Lower leg skin (tissue), 4 donors: ENCODE measurements at regions of chr2 and their contacts with region 1.

Region 1: DNA sequence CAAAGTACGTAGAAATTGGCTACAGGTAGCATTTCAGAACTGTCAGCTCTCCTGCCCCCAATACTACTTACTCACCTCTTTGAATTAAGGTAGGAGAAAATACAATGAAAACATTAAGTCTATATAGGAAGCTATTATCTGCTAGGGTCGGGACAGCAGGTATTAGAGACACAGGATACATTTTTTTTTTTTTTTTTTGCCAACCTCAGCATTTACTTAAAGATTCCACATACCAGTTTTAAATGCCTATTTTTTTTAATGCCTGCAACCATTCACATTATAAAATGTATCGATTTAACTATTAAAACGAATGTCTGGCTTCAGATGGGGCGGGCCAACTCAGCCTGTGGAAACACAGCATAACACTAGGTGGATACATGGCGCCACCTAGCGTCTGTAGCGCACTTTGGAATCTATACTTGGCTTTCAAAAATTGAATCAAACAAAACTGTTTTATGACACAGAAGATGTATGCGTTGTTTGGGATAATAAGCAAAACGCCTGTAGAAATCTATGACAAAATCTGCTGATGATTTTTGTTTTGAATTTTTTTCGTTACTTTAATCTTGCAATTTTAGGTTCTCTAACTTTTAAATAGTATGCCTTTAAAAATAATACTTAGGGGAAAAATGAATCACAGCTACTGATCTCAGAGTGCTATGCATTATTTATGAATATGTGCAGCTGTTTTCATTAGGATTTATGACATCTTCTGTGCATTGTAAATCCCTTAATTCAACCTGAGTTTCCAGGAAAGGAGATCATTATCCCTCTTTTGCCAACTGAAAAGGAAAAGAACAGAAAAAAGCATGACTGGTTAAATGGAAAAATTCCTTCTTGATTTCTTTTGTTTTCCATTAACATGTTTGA is 261.0 kb downstream of the NYAP2 start:
- DNase-seq: peak; percentile 56 to 93
- H3K4me3 ChIP-seq: no peak overlapping the region
- CTCF ChIP-seq: no peak
- POLR2A ChIP-seq: no peak

Region 2: GRCh38 chr2:225122583-225123486 is 537.7 kb before region 1 on chr2:
- intact Hi-C with region 1: loop called (anchors 5 kb)
- DNase-seq: no peak
- H3K4me3 ChIP-seq: no peak overlapping the region
- CTCF ChIP-seq: no peak
- POLR2A ChIP-seq: no peak

Region 3: GRCh38 chr2:225282858-225283710 is 377.4 kb before region 1 on chr2:
- intact Hi-C with region 1: loop called (anchors 5 kb)
- DNase-seq: no peak
- H3K4me3 ChIP-seq: no peak overlapping the region
- CTCF ChIP-seq: no peak
- POLR2A ChIP-seq: no peak

Region 4: DNA sequence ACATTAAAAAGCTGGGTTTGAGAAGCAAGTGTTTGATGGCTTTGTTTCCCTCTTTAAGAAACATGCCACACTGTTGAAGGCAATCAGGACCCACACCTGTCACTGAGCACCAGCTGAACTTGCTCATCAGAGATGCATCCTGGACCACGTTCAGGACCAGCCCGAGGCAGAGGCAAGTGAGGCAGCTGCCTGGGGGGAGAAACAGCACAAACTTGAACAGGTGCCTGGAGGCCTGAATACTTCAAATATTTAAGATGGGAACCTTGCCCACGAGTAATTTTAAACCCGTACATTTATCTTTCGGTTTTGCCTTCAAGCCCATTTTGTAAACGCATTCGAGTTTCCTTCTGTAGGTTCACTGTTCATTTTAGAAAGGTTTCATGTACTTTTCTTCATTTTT is 160.3 kb after region 1 on chr2:
- intact Hi-C with region 1: no loop called
- DNase-seq: no peak
- H3K4me3 ChIP-seq: no peak overlapping the region
- CTCF ChIP-seq: no peak
- POLR2A ChIP-seq: no peak